Naive thymus-derived CD8-positive, alpha-beta T cell (primary cell): ENCODE measurements at regions of chr5 and their contacts with region 1.

Region 1: GRCh38 chr5:68303038-68303738 is 87.6 kb downstream of the PIK3R1 start:
- DNase-seq: no peak
- ATAC-seq: no peak
- H3K4me3 Mint-ChIP-seq: no peak overlapping the region
- H3K27ac Mint-ChIP-seq: peak overlapping the region in 5 of 10 donors; percentile 6 to 71 (median 40)
- H3K4me1 Mint-ChIP-seq: peaks cover 7 to 22% (median 16%) of the 10 kb centered on the region in 4 donors
- H3K27me3 Mint-ChIP-seq: no peaks in the 10 kb centered on the region

Region 2: DNA sequence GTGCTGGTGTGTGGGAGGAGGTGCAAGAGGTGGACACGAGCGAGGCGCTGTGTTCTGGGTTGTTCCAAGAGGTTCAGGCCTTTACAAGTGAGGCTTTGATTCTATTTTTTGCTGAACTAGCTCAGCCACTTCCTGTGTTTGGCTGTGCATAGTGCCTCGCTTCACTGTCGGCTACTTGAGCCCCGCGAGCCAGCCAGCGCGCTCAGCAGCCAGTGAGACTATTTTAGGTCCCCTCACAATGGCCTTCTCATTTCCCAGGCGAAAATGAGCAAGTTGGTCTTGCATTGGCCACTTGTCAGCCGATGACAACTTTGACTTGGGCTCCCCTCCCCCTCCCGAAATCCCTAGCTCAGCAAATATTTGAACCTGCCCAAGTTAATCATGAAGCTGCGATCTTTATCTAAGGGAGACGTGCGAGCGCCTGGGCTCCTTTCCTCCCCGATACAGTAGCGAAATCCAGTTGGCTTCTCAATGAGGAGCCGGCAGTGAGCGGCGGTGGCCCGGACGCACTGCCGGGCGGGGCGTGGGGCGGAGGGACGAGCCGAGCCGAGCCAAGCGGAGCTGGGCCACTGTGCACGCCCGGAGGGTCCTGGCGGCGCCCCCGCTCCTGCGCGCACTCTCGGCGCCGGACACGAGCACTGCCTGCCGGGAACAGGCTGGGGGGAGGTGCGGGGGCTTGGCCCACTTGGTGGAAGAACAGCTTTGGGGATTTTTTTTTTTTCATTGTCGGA is 15.0 kb before region 1 on chr5:
- POLR2A ChIA-PET with region 1: interaction called, 15 read pairs
- DNase-seq: peak; percentile 4 to 69 (median 40)
- ATAC-seq: peak; percentile 80
- H3K4me3 Mint-ChIP-seq: peak overlapping the region; percentile 78 to 95 (median 92)
- H3K27ac Mint-ChIP-seq: peak overlapping the region; percentile 91 to 97 (median 94)
- H3K4me1 Mint-ChIP-seq: peaks cover 28 to 91% (median 88%) of the 10 kb centered on the region in 4 donors
- H3K27me3 Mint-ChIP-seq: no peaks in the 10 kb centered on the region